Right ventricle myocardium superior (tissue), 1 donor: ENCODE measurements at regions of chr19 and their contacts with region 1.

Region 1: GRCh38 chr19:15251749-15252397 is 19.6 kb upstream of the EPHX3 start:
- DNase-seq: peak; percentile 91
- ATAC-seq: peak; percentile 74

Region 2: GRCh38 chr19:15115111-15116053 is 136.5 kb before region 1 on chr19:
- intact Hi-C with region 1: loop called (anchors 10 kb)
- DNase-seq: peak; percentile 94
- ATAC-seq: peak; percentile 79

Region 3: GRCh38 chr19:15177269-15178116 is 74.4 kb before region 1 on chr19:
- intact Hi-C with region 1: loop called (anchors 5 kb)
- DNase-seq: peak; percentile 90
- ATAC-seq: peak; percentile 91

Region 4: DNA sequence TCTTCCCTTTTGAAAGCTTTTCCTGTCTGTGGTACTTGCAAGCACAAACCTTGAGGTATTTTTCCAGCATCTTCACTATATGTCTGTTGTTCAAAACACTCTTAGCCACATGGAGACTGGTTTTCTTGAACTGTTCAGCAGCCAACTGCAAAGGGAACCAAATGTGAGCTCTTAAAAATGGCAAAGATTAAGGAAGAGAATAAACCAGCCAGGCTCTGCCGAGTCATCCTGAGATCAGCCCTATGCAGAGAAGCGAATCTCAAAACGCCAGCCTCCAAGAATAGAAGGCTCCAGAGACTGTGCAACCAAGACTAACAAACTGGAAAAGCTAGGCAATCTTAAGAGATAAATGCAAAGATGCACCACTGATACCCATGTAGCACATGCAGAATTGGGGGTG is 107.0 kb after region 1 on chr19:
- intact Hi-C with region 1: no loop called
- DNase-seq: no peak
- ATAC-seq: no peak

Region 5: DNA sequence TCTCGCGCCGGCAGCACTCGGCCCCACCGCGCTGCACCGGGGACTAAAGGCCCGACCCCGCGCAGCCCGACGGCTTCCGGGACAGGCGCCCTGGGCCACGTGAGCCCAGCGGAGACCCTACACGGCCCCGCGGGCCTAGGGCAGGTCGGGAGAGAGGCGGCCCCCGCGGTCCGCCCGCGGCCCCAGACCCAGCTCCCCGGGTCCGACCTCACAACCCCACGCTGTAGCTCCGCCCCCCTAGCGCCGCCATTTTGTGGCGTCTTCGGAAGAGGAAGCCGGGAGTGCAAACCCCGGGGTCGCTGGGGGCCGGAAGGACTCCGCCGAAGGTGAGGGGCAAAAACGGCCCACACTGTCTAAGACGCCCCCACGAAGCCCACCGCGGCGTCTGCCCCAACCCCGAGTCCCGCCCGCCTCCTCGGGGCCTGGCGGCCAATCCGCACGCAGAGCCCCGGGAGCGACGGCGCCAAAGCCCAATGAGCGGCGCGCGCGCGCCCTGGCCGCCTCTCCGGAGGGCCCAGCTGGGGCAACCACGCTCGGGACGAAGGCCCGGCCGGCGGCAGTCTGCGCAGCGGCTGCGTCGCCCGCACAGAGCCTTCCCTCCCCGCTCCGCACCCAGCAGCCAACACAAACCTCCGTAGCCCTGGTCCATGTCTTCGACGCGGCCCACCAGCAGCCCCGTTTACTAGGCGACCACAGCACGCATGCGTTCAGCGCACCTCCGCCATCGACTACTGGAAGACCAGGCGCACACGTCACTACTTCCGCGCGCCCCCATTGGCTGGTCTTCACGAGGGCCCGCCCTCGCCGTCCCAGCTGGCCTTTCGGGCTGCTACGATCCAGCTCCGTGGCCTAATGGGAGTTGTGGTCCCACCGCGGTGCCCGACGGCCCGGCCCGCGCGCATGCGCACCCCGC is 127.5 kb after region 1 on chr19 and contains the start of gene AKAP8:
- intact Hi-C with region 1: loop called (anchors 10 kb)
- DNase-seq: peak; percentile 99
- ATAC-seq: peak; percentile 94
- total RNA-seq, gene AKAP8: 20.6 TPM